ENCODE measurements at regions of chr13 and their contacts with region 1.

Region 1: DNA sequence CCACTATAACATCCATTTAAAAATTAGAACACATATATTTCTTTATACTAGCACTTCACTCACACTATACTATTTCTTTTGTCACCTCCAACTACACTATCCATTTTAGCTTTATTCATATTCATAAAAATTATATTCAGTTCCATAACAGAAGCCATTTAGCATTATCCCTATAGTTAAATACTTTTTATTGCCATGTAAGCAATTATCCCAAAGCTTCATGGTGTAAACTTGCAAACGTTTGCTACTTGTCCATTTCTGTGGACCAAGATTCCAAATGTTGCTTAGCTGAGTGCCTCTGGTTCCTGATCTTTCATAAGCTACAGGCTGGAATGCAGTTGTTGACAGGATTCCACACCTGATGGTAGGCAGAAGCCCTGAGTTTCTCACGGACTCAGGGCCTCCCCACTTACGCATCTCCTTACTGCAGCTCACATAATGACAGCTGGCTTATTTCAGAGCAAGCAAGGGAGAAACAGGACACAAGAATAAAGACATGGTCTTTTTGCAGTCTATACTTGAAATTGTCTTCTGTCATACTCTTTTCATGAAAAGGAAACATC is 1584.8 kb downstream of the SLITRK5 start:
- DNase-seq: no peak
- H3K4me3 ChIP-seq: no peak overlapping the region
- H3K27ac ChIP-seq: no peak overlapping the region
- H3K4me1 ChIP-seq: no peaks in the 10 kb centered on the region
- H3K27me3 ChIP-seq: no peaks in the 10 kb centered on the region
- CTCF ChIP-seq: no peak

Region 2: GRCh38 chr13:88507909-88508308 is 748.0 kb before region 1 on chr13:
- CTCF ChIA-PET with region 1: no interaction called
- POLR2A ChIA-PET with region 1: no interaction called
- intact Hi-C with region 1: no loop called
- DNase-seq: no peak
- H3K4me3 ChIP-seq: no peak overlapping the region
- H3K27ac ChIP-seq: no peak overlapping the region
- H3K4me1 ChIP-seq: no peaks in the 10 kb centered on the region
- H3K27me3 ChIP-seq: no peaks in the 10 kb centered on the region
- CTCF ChIP-seq: no peak

Region 3: DNA sequence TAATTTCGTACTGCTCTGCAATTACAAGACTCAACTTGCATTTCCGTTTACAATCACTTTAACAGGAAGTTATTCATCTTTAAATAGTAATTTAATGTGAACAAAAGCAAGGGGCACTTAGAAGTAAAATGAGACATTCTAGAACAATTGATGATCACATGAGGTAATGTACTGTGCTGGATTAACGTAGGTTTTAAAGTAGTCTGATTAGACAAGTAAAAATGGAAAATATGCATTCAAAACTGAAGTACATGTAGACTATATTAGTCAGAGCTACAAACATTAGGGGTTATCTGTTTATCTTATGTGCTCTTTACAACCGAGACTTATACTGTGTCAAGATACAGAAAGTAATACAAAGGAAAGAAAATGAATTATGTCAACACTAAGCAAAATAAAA is 56.8 kb before region 1 on chr13:
- CTCF ChIA-PET with region 1: no interaction called
- POLR2A ChIA-PET with region 1: interaction called, 11 read pairs
- intact Hi-C with region 1: no loop called
- DNase-seq: no peak
- H3K4me3 ChIP-seq: no peak overlapping the region
- H3K27ac ChIP-seq: no peak overlapping the region
- H3K4me1 ChIP-seq: no peaks in the 10 kb centered on the region
- H3K27me3 ChIP-seq: no peaks in the 10 kb centered on the region
- CTCF ChIP-seq: no peak

Region 4: DNA sequence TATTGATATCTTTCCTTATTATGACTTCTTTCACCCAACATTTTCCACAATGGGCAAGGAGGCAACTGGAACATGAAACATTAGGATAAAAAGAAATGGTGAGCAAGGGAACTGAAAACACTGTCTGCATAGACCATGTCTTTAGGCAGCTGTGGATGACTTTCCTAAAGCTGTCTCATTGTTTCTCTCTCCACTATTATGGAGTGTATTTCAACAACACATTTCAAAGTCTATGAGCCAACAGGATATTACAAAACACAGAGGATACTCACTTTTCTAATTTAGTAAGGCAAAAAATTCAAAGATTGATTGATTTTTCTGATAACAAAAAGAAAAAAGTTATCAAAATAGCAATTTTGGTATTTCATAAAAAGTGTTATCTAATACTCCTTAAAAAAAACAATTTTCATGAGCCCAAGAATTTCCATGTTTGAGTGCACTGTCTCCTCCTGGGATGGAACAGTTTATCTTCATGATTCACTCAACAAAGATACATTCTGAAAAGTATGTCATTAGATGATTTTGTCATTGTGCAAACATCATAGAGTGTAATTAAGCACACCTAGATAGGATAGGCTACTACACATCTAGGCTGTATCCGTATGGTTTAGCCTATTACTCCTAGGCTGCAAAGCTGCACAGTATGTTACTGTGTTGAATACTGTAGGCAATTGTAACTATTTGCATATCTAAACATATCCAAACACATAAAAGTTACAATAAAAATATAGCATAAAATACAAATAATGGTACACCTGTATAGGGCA is 16.4 kb before region 1 on chr13:
- CTCF ChIA-PET with region 1: no interaction called
- POLR2A ChIA-PET with region 1: no interaction called
- intact Hi-C with region 1: no loop called
- DNase-seq: no peak
- H3K4me3 ChIP-seq: no peak overlapping the region
- H3K27ac ChIP-seq: no peak overlapping the region
- H3K4me1 ChIP-seq: no peaks in the 10 kb centered on the region
- H3K27me3 ChIP-seq: no peaks in the 10 kb centered on the region
- CTCF ChIP-seq: no peak

Measured in PC-9 (cell line).